ENCODE measurements at regions of chr6 and their contacts with region 1.

Region 1: GRCh38 chr6:166342349-166343149 is at the start of gene SFT2D1:
- DNase-seq: peak; percentile 80
- ATAC-seq: peak; percentile 75
- H3K4me3 Mint-ChIP-seq: peak within 1 kb of the TSS; percentile 81
- H3K27ac Mint-ChIP-seq: peak within 1 kb of the TSS; percentile 80
- H3K4me1 Mint-ChIP-seq: peaks cover 14% of the 10 kb centered on the region
- H3K27me3 Mint-ChIP-seq: no peaks in the 10 kb centered on the region
- total RNA-seq, gene SFT2D1: 39.8 to 54.2 TPM

Region 2: DNA sequence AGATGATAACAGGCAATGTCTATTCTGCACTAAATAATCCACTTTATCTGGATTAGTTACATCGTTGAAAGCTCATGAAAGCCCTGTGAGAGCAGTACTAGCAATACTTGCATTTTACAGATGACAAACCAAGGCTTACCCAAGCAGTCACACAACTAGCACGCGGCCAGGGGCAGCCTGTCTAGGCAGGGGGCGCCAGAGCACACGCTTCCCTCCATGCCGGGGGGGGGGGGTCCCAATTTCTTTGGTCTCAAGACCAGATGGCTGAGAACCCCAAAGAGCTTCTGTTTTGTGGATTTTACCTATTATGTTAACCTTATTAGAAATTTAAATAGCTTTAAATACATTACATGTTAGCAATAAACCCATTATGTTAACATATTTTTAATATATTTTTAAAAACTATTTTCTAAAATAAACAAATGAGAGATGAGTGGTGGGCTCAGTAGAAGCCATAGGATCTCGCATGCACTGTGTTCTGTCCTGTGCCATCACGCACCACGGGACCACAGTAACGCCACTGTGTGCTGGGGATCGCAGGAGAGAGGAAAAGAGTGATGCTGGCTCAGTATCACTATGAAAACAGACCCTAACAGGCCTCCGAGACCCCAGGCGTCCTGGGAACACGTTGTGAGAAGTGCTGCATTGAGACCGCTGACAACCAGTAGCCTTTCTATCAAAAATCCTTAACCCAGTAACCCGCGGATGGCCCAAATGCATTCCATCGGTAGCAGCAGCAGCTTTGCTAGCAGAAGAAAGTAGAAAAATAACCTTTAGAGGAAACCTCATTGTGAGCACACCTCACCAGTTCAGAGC is 29.1 kb before region 1 on chr6:
- CTCF ChIA-PET with region 1: no interaction called
- POLR2A ChIA-PET with region 1: no interaction called
- intact Hi-C with region 1: loop called in 1 of 2 experiments (anchors 2 kb)
- DNase-seq: peak; percentile 83
- ATAC-seq: peak; percentile 97
- H3K4me3 Mint-ChIP-seq: no peak overlapping the region
- H3K27ac Mint-ChIP-seq: no peak overlapping the region
- H3K4me1 Mint-ChIP-seq: peaks cover 3% of the 10 kb centered on the region
- H3K27me3 Mint-ChIP-seq: peaks cover 16% of the 10 kb centered on the region

Region 3: DNA sequence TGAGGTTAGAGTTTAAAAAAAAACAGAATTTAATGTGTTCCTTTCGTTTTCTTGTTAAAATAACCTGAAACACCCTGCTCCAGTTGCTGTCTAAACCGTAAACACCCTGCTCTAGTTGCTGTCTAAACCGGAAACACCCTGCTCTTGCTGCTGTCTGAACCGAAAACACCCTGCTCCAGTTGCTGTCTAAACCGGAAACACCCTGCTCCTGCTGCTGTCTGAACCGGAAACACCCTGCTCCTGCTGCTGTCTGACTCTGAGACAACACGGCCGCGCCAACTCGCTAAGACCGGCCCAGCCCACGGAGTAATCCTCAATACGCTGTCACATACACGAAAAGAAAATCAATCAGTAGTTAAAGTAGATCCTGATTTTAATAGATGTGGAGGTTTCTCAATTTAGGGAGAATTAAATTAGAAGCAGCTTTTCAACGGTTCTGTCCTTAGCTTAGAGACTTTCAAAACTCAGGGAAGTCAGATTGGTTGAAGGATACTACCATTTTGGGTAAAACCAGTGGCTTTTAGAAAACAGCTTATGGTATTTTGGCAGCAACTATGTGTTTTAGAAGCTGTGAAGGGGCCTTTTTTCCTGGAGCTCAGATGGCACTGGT is 145.6 kb after region 1 on chr6:
- CTCF ChIA-PET with region 1: no interaction called
- POLR2A ChIA-PET with region 1: interaction called, 11 read pairs
- intact Hi-C with region 1: no loop called
- DNase-seq: peak; percentile 86
- ATAC-seq: peak; percentile 98
- H3K4me3 Mint-ChIP-seq: peak overlapping the region; percentile 65
- H3K27ac Mint-ChIP-seq: peak overlapping the region; percentile 98
- H3K4me1 Mint-ChIP-seq: peaks cover 19% of the 10 kb centered on the region
- H3K27me3 Mint-ChIP-seq: no peaks in the 10 kb centered on the region

Region 4: DNA sequence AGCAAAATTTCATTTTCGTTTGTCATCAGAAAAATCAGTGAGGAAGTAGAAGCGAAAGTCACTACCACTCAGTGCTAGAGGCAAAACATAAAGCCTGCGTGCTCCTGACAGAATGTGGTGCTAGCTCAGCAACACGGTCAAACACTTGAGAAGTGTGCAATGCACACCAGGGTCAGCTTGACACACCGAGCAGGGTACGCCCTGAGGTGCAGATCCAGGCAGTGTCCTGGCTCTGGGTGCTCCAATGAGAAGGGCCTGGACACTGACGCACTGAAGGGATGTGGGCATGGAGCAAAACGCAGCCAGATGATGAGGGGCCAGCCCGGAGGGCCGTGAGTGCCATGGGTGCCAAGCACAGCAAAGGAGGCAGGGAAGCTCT is 607.9 kb after region 1 on chr6:
- CTCF ChIA-PET with region 1: no interaction called
- POLR2A ChIA-PET with region 1: no interaction called
- intact Hi-C with region 1: loop called in 1 of 2 experiments (anchors 5 kb)
- DNase-seq: peak; percentile 48
- ATAC-seq: peak; percentile 34
- H3K4me3 Mint-ChIP-seq: peak overlapping the region; percentile 61
- H3K27ac Mint-ChIP-seq: peak overlapping the region; percentile 95
- H3K4me1 Mint-ChIP-seq: peaks cover 62% of the 10 kb centered on the region
- H3K27me3 Mint-ChIP-seq: no peaks in the 10 kb centered on the region